ENCODE measurements at regions of chr5 and their contacts with region 1.

Region 1: GRCh38 chr5:164341056-164341619 is 835.7 kb downstream of the MAT2B start:
- DNase-seq: no peak
- ATAC-seq: no peak
- H3K4me3 ChIP-seq: no peak overlapping the region
- H3K27ac ChIP-seq: no peak overlapping the region
- H3K4me1 ChIP-seq: peaks cover 0 to 6% (median 0%) of the 10 kb centered on the region in 9 donors
- H3K27me3 ChIP-seq: no peaks in the 10 kb centered on the region
- CTCF ChIP-seq: no peak

Region 2: DNA sequence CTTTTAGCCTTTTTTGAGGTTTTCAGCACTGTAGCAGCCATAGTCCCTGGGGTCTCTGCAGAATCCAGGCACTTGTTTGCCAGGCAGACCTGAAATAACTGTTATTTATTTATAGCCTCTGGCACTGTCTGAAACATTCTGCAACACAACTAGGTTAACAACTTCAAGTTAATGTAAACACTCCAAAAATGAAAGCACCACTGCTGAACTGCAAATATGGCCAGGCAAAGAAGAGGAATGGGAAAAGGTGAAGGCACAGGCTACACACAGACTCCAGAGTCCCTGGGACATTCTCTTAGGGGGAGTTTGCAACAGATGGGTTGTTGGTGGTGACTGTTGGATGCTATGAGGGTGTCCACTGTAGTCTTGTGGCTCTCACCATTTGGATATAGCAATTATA is 466.7 kb before region 1 on chr5:
- intact Hi-C with region 1: loop called in 1 of 10 experiments (anchors 5 kb)
- DNase-seq: no peak
- ATAC-seq: no peak
- H3K4me3 ChIP-seq: no peak overlapping the region
- H3K27ac ChIP-seq: no peak overlapping the region
- H3K4me1 ChIP-seq: no peaks in the 10 kb centered on the region
- H3K27me3 ChIP-seq: no peaks in the 10 kb centered on the region
- CTCF ChIP-seq: no peak